Posterior vena cava (tissue), 2 donors: ENCODE measurements at regions of chr7 and their contacts with region 1.

Region 1: DNA sequence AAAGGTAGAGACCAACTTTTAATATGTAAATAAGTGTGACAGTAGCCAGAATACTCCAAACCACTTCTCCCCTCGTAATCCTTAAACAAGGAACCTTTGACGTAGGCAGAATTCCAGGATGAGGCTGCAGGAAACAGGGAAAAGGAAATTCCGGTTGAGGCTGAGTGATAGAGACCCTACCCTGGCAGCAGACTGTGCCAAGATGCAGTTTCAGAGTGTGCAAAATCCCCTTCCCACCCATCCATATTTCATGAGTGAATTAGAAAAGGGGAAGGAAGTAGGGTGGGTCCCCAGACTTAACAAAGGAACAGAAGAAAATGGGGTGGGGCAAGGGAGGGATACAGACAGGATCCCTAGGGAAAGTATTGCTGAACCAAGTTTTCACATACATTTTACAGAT is 143.0 kb downstream of the RAPGEF5 start:
- DNase-seq: no peak

Region 2: GRCh38 chr7:22231811-22232210 is 17.8 kb after region 1 on chr7:
- intact Hi-C with region 1: loop called in 1 of 2 experiments (anchors 2 kb)
- DNase-seq: no peak

Region 3: GRCh38 chr7:22319424-22320403 is 105.7 kb after region 1 on chr7:
- intact Hi-C with region 1: no loop called
- DNase-seq: no peak